ENCODE measurements at regions of chr5 and their contacts with region 1.

Region 1: GRCh38 chr5:160342403-160342941 is 28.0 kb downstream of the C1QTNF2 start:
- DNase-seq: no peak
- ATAC-seq: no peak
- H3K4me3 ChIP-seq: no peak overlapping the region
- H3K27ac ChIP-seq: peak overlapping the region in 1 of 2 experiments; percentile 39; a peak in 2 of 6 replicates
- H3K4me1 ChIP-seq: peaks cover 15% of the 10 kb centered on the region
- CTCF ChIP-seq: no peak
- EP300 ChIP-seq: no peak
- POLR2A ChIP-seq: no peak
- RAD21 ChIP-seq: no peak

Region 2: GRCh38 chr5:160021831-160022446 is 320.5 kb before region 1 on chr5:
- CTCF ChIA-PET with region 1: interaction called, 87 read pairs
- POLR2A ChIA-PET with region 1: no interaction called
- DNase-seq: peak; percentile 58 to 61
- ATAC-seq: peak; percentile 93 to 97
- H3K4me3 ChIP-seq: no peak overlapping the region
- H3K27ac ChIP-seq: no peak overlapping the region
- H3K4me1 ChIP-seq: no peaks in the 10 kb centered on the region
- CTCF ChIP-seq: peak; percentile 80
- EP300 ChIP-seq: no peak
- POLR2A ChIP-seq: no peak
- RAD21 ChIP-seq: peak; percentile 77 to 81

Region 3: GRCh38 chr5:160165137-160166068 is 177.1 kb before region 1 on chr5:
- CTCF ChIA-PET with region 1: interaction called, 12 read pairs
- POLR2A ChIA-PET with region 1: no interaction called
- DNase-seq: peak; percentile 95 to 96
- ATAC-seq: peak; percentile 92 to 95
- H3K4me3 ChIP-seq: peak overlapping the region; percentile 26; the same call in 1 of the 3 replicates
- H3K27ac ChIP-seq: peak overlapping the region; percentile 92 to 98
- H3K4me1 ChIP-seq: peaks cover 21% of the 10 kb centered on the region
- CTCF ChIP-seq: no peak
- EP300 ChIP-seq: no peak
- POLR2A ChIP-seq: peak; percentile 42
- RAD21 ChIP-seq: no peak

Region 4: DNA sequence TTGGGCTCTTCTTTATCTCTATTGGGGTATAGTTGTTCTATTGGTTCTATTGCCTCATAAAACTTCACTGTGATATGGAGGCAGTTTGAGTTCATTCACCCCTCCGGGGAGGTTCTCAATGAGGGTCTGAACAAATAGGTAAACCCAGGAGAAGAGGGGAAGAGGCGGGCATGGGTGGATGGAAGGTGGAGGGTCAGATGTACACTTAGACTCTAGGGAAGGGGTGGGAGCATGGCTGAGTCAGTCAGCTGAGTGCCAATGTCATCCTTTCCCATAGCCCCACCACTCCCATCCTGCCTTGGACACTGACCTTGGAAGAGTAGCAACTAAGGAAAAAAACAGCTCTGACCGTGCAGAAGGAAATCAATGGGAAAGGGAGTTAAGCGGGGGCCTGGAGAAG is 123.1 kb before region 1 on chr5:
- CTCF ChIA-PET with region 1: interaction called, 17 read pairs
- POLR2A ChIA-PET with region 1: no interaction called
- DNase-seq: no peak
- ATAC-seq: no peak
- H3K4me3 ChIP-seq: no peak overlapping the region
- H3K27ac ChIP-seq: no peak overlapping the region
- H3K4me1 ChIP-seq: no peaks in the 10 kb centered on the region
- CTCF ChIP-seq: no peak
- EP300 ChIP-seq: no peak
- POLR2A ChIP-seq: no peak
- RAD21 ChIP-seq: no peak

Region 5: GRCh38 chr5:160253441-160253840 is 89.0 kb before region 1 on chr5:
- CTCF ChIA-PET with region 1: interaction called, 128 read pairs
- POLR2A ChIA-PET with region 1: no interaction called
- DNase-seq: no peak
- ATAC-seq: 0 out of 6 replicates have a peak, but pooled peaks of 1 of the 2 experiments have one; percentile 19
- H3K4me3 ChIP-seq: no peak overlapping the region
- H3K27ac ChIP-seq: no peak overlapping the region
- H3K4me1 ChIP-seq: no peaks in the 10 kb centered on the region
- CTCF ChIP-seq: no peak
- EP300 ChIP-seq: no peak
- POLR2A ChIP-seq: no peak
- RAD21 ChIP-seq: no peak

Region 6: DNA sequence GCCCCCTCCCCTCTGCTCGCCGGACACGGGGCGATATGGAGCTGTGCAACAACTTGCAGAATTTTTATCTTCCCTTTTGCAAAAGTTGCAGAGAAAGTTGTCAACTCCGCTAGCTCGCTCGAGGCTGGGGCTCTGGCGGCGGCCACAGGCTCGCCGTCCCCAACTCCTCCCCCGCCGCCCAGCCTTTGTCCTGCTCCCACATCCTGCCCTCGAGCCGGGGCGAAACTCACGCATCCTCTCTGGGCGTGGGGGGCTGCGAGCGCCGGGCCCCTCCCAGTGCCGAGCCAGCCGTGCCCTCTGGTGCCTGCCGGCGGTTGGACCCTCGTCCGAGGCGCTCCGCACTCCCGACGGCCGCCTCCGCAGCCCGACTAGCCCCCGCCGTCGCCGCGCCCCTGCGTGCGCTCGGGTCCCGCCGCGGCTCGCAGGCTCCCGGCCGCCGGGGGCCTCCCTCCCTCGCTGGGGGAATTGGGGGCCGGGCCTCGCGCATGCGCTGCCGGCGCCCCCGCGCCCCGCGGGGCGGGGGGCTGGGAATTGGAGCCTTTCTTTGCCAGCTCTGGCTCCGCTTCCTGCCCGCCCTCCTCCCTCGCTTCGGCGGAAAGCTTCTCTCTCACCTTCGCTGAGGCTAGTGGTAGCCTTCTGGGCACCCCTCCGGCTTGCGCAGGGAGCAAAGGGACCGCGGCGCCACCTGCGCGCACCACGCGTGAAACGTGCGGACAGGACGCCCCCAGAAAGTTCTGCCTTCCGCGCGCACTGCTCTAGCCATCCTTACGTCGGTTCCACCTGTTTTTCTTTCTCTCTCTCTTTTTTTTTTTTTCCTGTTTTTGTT is 30.1 kb before region 1 on chr5 and contains the start of gene CCNJL:
- CTCF ChIA-PET with region 1: interaction called, 9 read pairs
- POLR2A ChIA-PET with region 1: interaction called, 15 read pairs
- DNase-seq: peak; percentile 62 to 86
- ATAC-seq: peak; percentile 69 to 77
- H3K4me3 ChIP-seq: peak within 1 kb of the TSS; percentile 80
- H3K27ac ChIP-seq: peak within 1 kb of the TSS; percentile 89 to 91
- H3K4me1 ChIP-seq: peaks cover 46% of the 10 kb centered on the region
- CTCF ChIP-seq: no peak
- EP300 ChIP-seq: no peak
- POLR2A ChIP-seq: peak; percentile 57
- RAD21 ChIP-seq: no peak
- polyA plus RNA-seq, gene CCNJL: 16.2 and 16.8 TPM in 2 replicates

Region 7: GRCh38 chr5:160369990-160370712 is 27.7 kb after region 1 on chr5 and contains the start of gene C1QTNF2:
- CTCF ChIA-PET with region 1: interaction called, 22 read pairs
- POLR2A ChIA-PET with region 1: no interaction called
- DNase-seq: peak; percentile 6 to 56
- ATAC-seq: peak; percentile 46 to 83; a peak in 4 of 6 replicates
- H3K4me3 ChIP-seq: peak within 1 kb of the TSS; percentile 47
- H3K27ac ChIP-seq: peak within 1 kb of the TSS; percentile 2 to 83; a peak in 4 of 6 replicates
- H3K4me1 ChIP-seq: no peaks in the 10 kb centered on the region
- CTCF ChIP-seq: no peak
- EP300 ChIP-seq: no peak
- POLR2A ChIP-seq: no peak
- RAD21 ChIP-seq: no peak
- polyA plus RNA-seq, gene C1QTNF2: 0.04 TPM in 1 of 2 replicates, not detected in the other

Region 8: GRCh38 chr5:160616712-160617497 is 274.4 kb after region 1 on chr5:
- CTCF ChIA-PET with region 1: no interaction called
- POLR2A ChIA-PET with region 1: no interaction called
- DNase-seq: no peak
- ATAC-seq: no peak
- H3K4me3 ChIP-seq: no peak overlapping the region
- H3K27ac ChIP-seq: no peak overlapping the region
- H3K4me1 ChIP-seq: no peaks in the 10 kb centered on the region
- CTCF ChIP-seq: no peak
- EP300 ChIP-seq: no peak
- POLR2A ChIP-seq: no peak
- RAD21 ChIP-seq: no peak